ENCODE measurements at regions of chr19 and their contacts with region 1.

Region 1: DNA sequence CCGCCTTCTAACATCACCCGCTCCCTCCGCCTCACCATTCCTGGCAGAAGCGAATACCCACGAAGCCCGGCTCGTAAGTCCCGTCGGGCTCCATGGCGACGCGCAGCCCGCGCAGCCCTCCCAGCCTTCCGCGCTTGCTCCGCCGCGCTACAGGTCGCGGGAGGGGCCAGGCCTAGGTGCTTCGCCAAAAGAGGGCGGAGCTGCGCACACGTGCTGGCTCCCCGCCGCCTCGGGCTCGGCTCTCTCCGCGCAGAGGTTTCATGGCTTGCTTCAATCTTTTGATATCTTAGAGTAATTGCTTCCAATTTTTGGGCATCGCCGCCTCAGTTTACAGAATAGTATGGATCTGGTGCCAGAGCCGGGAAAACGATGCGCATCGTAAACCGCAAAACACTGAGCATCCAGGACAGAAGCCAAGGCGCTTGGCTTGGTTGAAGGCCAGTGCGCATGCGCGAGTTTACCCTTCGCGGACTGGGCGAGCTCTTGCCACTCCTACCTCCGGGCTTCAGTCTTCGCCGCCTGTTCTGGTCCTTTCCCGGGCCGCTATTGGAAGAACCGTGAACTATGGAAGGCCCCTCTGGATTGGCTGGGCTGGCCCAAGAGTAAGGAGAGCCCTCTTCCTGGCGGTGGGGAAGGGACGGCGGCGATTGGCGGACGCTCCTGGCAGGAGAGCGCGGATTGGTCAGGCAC is at the start of gene POLR2I:
- DNase-seq: peak; percentile 96 to 100 (median 99)
- ATAC-seq: peak; percentile 86
- H3K4me3 ChIP-seq: peak within 1 kb of the TSS; percentile 97
- H3K4me3 Mint-ChIP-seq: peak within 1 kb of the TSS; percentile 94
- H3K27ac ChIP-seq: peak within 1 kb of the TSS; percentile 87 to 92
- H3K27ac Mint-ChIP-seq: peak within 1 kb of the TSS; percentile 94
- H3K4me1 ChIP-seq: peaks cover 40% of the 10 kb centered on the region
- H3K4me1 Mint-ChIP-seq: peaks cover 42% of the 10 kb centered on the region
- H3K27me3 ChIP-seq: no peaks in the 10 kb centered on the region
- H3K27me3 Mint-ChIP-seq: no peaks in the 10 kb centered on the region
- CTCF ChIP-seq: no peak
- total RNA-seq, gene POLR2I: 29.2 to 31.1 TPM

Region 2: DNA sequence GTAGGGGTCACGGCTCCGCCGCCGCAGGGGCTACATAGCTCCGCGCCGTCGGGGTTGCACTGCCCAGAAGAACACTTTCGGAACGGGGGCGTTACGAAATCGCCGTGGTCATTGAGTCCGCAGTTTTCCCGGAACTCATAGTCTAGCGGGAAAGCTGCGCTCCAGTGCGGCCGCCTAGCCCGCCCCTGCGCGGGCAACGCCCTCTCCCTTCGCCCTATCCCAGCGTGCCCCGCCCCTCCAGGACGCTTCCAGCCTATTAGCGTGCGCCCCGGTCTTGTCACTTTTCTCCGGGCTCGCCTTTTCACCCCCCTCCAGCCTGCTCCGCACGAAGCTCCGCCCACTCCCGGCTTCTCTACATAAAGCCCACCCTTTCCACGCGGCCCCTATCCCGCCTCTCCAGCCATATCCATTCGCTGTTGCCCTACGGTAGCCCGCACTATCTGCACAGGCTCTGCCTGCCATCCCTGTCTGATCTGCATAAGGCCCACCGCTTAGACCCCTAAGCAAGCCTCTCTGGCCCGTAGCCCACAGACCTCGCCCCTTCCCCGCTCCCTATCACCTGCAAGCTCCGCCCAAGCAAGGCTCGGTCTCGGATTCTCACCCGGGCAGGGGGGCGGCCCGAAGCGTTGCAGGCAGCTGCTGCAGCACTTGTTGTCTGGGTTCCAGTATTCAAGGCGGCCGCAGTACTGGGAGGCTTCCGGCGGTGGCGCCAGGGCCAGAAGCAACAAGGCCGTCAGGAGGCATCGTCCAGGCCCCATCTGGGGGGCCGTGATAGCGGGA is 374.3 kb before region 1 on chr19:
- CTCF ChIA-PET with region 1: no interaction called
- POLR2A ChIA-PET with region 1: interaction called, 3 read pairs
- intact Hi-C with region 1: loop called in 1 of 2 experiments (anchors 10 kb)
- DNase-seq: peak; percentile 88 to 97 (median 94)
- ATAC-seq: peak; percentile 60
- H3K4me3 ChIP-seq: peak overlapping the region; percentile 91
- H3K4me3 Mint-ChIP-seq: peak overlapping the region; percentile 99
- H3K27ac ChIP-seq: peak overlapping the region; percentile 62 to 72
- H3K27ac Mint-ChIP-seq: peak overlapping the region; percentile 98
- H3K4me1 ChIP-seq: peaks cover 68% of the 10 kb centered on the region
- H3K4me1 Mint-ChIP-seq: peaks cover 52% of the 10 kb centered on the region
- H3K27me3 ChIP-seq: no peaks in the 10 kb centered on the region
- H3K27me3 Mint-ChIP-seq: no peaks in the 10 kb centered on the region
- CTCF ChIP-seq: no peak

Region 3: GRCh38 chr19:35949131-35949530 is 165.8 kb before region 1 on chr19:
- CTCF ChIA-PET with region 1: no interaction called
- POLR2A ChIA-PET with region 1: interaction called, 10 read pairs
- intact Hi-C with region 1: no loop called
- DNase-seq: no peak
- ATAC-seq: no peak
- H3K4me3 ChIP-seq: no peak overlapping the region
- H3K4me3 Mint-ChIP-seq: peak overlapping the region; percentile 10
- H3K27ac ChIP-seq: no peak overlapping the region
- H3K27ac Mint-ChIP-seq: peak overlapping the region; percentile 82
- H3K4me1 ChIP-seq: peaks cover 46% of the 10 kb centered on the region
- H3K4me1 Mint-ChIP-seq: peaks cover 63% of the 10 kb centered on the region
- H3K27me3 ChIP-seq: no peaks in the 10 kb centered on the region
- H3K27me3 Mint-ChIP-seq: no peaks in the 10 kb centered on the region
- CTCF ChIP-seq: no peak

Region 4: GRCh38 chr19:36014029-36014924 is 100.6 kb before region 1 on chr19 and contains the start of gene ALKBH6:
- CTCF ChIA-PET with region 1: no interaction called
- POLR2A ChIA-PET with region 1: interaction called, 5 read pairs
- intact Hi-C with region 1: loop called in 1 of 2 experiments (anchors 2 kb)
- DNase-seq: peak; percentile 97 to 100 (median 99)
- ATAC-seq: peak; percentile 98
- H3K4me3 ChIP-seq: peak within 1 kb of the TSS; percentile 88
- H3K4me3 Mint-ChIP-seq: peak within 1 kb of the TSS; percentile 99
- H3K27ac ChIP-seq: peak within 1 kb of the TSS; percentile 75 to 89
- H3K27ac Mint-ChIP-seq: peak within 1 kb of the TSS; percentile 94
- H3K4me1 ChIP-seq: peaks cover 32% of the 10 kb centered on the region
- H3K4me1 Mint-ChIP-seq: peaks cover 46% of the 10 kb centered on the region
- H3K27me3 ChIP-seq: no peaks in the 10 kb centered on the region
- H3K27me3 Mint-ChIP-seq: no peaks in the 10 kb centered on the region
- CTCF ChIP-seq: no peak
- total RNA-seq, gene ALKBH6: 38.1 to 41.8 TPM

Region 5: GRCh38 chr19:36093146-36093662 is 21.7 kb before region 1 on chr19:
- CTCF ChIA-PET with region 1: no interaction called
- POLR2A ChIA-PET with region 1: no interaction called
- intact Hi-C with region 1: no loop called
- DNase-seq: no peak
- ATAC-seq: no peak
- H3K4me3 ChIP-seq: no peak overlapping the region
- H3K4me3 Mint-ChIP-seq: no peak overlapping the region
- H3K27ac ChIP-seq: no peak overlapping the region
- H3K27ac Mint-ChIP-seq: no peak overlapping the region
- H3K4me1 ChIP-seq: no peaks in the 10 kb centered on the region
- H3K4me1 Mint-ChIP-seq: no peaks in the 10 kb centered on the region
- H3K27me3 ChIP-seq: no peaks in the 10 kb centered on the region
- H3K27me3 Mint-ChIP-seq: no peaks in the 10 kb centered on the region
- CTCF ChIP-seq: no peak

Region 6: DNA sequence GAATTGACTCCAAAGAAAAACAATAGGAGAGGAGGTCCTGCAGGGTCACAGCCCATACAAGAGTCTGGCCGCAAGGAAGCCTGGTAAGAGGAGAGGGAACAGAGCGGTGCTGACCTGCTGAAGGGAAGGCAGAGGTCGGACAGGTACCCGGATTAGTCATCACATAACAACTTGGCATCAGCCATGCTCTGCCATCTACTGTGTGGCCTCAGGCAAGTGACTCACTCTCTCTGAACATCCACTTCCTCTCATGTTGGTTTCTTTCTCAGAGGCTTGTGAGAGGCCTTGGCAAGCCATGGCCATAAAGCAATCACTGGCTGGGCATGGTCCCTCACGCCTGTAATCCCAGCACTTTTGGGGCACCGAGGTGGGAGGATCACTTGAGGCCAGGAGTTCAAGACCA is 17.6 kb after region 1 on chr19:
- CTCF ChIA-PET with region 1: interaction called, 29 read pairs
- POLR2A ChIA-PET with region 1: interaction called, 51 read pairs
- intact Hi-C with region 1: loop called in 1 of 2 experiments (anchors 1 kb)
- DNase-seq: peak in 7 of 14 experiments; percentile 19 to 62 (median 47)
- ATAC-seq: no peak
- H3K4me3 ChIP-seq: no peak overlapping the region
- H3K4me3 Mint-ChIP-seq: no peak overlapping the region
- H3K27ac ChIP-seq: no peak overlapping the region
- H3K27ac Mint-ChIP-seq: no peak overlapping the region
- H3K4me1 ChIP-seq: peaks cover 39% of the 10 kb centered on the region
- H3K4me1 Mint-ChIP-seq: peaks cover 21% of the 10 kb centered on the region
- H3K27me3 ChIP-seq: no peaks in the 10 kb centered on the region
- H3K27me3 Mint-ChIP-seq: no peaks in the 10 kb centered on the region
- CTCF ChIP-seq: no peak

Region 7: DNA sequence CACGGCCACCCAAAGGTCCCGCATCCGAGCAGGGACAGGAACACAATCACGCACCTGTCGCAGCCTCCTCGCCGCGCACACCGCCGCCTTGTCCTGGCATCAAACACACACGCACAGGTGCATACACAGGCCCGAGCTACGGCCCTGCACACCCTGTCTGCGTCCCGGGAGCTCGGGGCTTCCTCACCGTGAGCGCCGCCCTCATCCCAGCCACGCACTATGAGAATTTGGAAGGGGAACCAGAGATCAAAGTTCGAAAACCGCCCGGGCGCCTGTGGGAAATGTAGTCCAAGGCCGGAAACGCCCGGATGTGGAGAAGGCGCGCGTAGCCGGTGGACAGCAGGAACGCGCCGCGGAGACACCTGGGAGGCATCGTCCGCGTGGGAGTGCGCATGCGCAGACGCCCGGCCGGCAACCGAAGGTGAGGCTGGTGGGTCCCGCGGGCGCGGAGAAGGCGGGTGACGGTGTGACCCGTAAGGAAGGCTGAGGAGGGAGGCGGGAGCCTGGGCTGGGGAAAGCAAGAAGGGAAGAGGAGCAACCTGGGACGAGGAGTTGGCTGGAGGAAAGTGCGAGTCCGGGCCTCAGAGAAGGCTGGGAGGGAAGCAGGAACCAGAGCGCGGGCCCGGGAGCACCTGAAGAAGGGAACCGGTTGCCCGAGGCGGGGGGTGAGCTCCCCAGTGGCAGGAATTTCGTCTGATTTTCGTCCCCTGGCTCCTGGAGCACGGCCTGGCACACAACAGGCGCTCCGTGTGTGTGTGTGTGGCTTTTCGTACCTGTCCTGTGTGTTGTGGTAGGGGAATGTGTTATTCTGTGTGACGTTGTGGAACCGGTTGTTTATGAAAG is 572.5 kb after region 1 on chr19 and contains the start of gene ZNF567:
- CTCF ChIA-PET with region 1: no interaction called
- POLR2A ChIA-PET with region 1: no interaction called
- intact Hi-C with region 1: loop called in 1 of 2 experiments (anchors 10 kb)
- DNase-seq: peak; percentile 94 to 99 (median 97)
- ATAC-seq: peak; percentile 93
- H3K4me3 ChIP-seq: peak within 1 kb of the TSS; percentile 67
- H3K4me3 Mint-ChIP-seq: peak within 1 kb of the TSS; percentile 99
- H3K27ac ChIP-seq: peak within 1 kb of the TSS; percentile 47 to 56
- H3K27ac Mint-ChIP-seq: peak within 1 kb of the TSS; percentile 97
- H3K4me1 ChIP-seq: peaks cover 23% of the 10 kb centered on the region
- H3K4me1 Mint-ChIP-seq: peaks cover 40% of the 10 kb centered on the region
- H3K27me3 ChIP-seq: no peaks in the 10 kb centered on the region
- H3K27me3 Mint-ChIP-seq: no peaks in the 10 kb centered on the region
- CTCF ChIP-seq: no peak
- total RNA-seq, gene ZNF567: 7.3 to 7.6 TPM

Region 8: DNA sequence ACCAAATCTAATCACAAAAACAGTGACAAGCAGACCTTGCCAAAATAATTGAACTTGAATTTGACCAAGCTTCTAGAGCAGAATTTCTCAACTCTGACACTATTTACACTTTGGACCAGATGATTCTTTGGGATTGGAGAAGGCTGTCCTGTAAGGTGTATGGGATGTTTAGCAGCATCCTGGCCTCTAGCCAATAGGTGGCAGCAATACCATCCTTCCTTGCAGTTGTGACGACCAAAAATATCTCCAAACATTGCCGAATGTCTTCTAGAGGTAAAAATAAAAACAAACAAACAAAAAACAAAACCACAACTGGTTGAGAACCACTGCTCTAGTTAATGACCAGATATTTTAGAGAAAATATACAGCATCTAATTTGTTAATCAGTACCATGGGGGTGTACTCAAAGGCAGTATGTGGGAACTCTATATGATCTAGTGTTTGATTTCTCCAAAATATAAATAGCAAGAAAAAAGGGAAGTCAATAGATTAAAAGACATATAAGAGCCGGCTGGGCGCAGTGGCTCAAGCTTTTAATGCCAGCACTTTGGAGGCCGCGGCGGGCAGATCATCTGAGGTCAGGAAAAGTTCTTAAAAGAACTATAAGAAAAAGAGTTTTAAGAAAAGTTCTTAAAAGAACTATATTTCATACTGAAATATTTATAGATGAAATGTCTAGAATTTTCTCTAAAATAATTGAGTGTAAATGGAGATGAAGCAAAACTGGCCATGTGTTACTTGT is 1195.1 kb after region 1 on chr19:
- CTCF ChIA-PET with region 1: no interaction called
- POLR2A ChIA-PET with region 1: no interaction called
- intact Hi-C with region 1: loop called in 1 of 2 experiments (anchors 10 kb)
- DNase-seq: peak in 7 of 14 experiments; percentile 9 to 68 (median 44)
- ATAC-seq: no peak
- H3K4me3 ChIP-seq: no peak overlapping the region
- H3K4me3 Mint-ChIP-seq: peak overlapping the region; percentile 50
- H3K27ac ChIP-seq: no peak overlapping the region
- H3K27ac Mint-ChIP-seq: no peak overlapping the region
- H3K4me1 ChIP-seq: peaks cover 12% of the 10 kb centered on the region
- H3K4me1 Mint-ChIP-seq: peaks cover 22% of the 10 kb centered on the region
- H3K27me3 ChIP-seq: peaks cover 0 to 7% of the 10 kb centered on the region in 2 experiments
- H3K27me3 Mint-ChIP-seq: peaks cover 11% of the 10 kb centered on the region
- CTCF ChIP-seq: peak; percentile 71

Measured in CD4-positive, alpha-beta T cell (primary cell).